ENCODE measurements at regions of chr4 and their contacts with region 1.

Region 1: GRCh38 chr4:86921608-86922252 is 13.1 kb upstream of the AFF1 start:
- DNase-seq: no peak
- H3K4me3 Mint-ChIP-seq: no peak overlapping the region
- H3K27ac Mint-ChIP-seq: no peak overlapping the region
- H3K4me1 Mint-ChIP-seq: peaks cover 16% of the 10 kb centered on the region
- H3K27me3 Mint-ChIP-seq: no peaks in the 10 kb centered on the region

Region 2: DNA sequence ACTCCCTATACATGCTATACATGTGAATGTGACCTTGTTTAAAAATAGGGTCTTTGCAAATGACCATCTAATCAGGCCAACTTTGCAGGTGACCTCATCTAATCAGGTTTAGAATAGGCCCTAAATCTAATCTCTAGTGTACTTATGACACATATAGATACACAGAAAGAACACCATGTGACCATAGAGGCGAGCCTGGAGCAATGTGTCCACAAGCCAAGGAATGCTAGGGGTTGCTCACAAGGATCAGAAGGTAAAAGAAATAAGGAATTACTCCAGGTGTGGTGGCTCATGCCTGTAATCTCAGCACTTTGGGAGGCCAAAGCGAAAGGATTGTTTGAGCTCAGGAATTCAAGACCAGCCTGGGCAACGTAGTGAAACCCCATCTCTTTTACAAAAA is 19.9 kb before region 1 on chr4:
- CTCF ChIA-PET with region 1: interaction called, 16 read pairs
- POLR2A ChIA-PET with region 1: no interaction called
- DNase-seq: no peak
- H3K4me3 Mint-ChIP-seq: no peak overlapping the region
- H3K27ac Mint-ChIP-seq: no peak overlapping the region
- H3K4me1 Mint-ChIP-seq: peaks cover 2% of the 10 kb centered on the region
- H3K27me3 Mint-ChIP-seq: peaks cover 3% of the 10 kb centered on the region

Region 3: GRCh38 chr4:86934771-86935565 is 13.2 kb after region 1 on chr4 and contains the start of gene AFF1:
- CTCF ChIA-PET with region 1: interaction called, 55 read pairs
- POLR2A ChIA-PET with region 1: interaction called, 9 read pairs
- DNase-seq: peak; percentile 91
- H3K4me3 Mint-ChIP-seq: peak within 1 kb of the TSS; percentile 83
- H3K27ac Mint-ChIP-seq: peak within 1 kb of the TSS; percentile 95
- H3K4me1 Mint-ChIP-seq: peaks cover 48% of the 10 kb centered on the region
- H3K27me3 Mint-ChIP-seq: no peaks in the 10 kb centered on the region
- total RNA-seq, gene AFF1: 68.8 to 72.0 TPM

Region 4: DNA sequence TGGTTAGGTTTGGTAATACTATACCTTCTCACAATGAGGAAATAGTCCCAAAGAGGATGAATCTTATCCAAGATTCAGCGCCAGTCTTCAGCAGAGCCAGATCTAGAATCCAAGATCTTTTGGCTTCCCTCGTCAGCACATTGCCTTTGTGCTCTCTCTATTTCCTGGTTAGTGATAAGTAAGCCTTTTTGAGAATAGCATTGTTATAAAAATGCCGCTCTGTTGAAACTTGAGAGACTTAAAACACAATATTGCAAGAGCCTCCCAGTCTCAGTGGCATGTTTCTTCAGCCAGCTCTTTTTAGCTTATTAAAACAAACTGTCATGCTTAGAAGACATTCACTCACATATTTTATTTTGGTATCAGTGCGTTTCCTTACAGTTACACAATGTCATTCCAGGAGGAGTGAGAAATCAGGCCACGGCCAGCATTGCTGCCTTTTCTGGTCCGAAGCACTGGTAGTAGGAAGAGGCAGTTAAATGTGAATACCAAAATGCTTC is 157.3 kb after region 1 on chr4:
- CTCF ChIA-PET with region 1: interaction called, 10 read pairs
- POLR2A ChIA-PET with region 1: no interaction called
- DNase-seq: no peak
- H3K4me3 Mint-ChIP-seq: no peak overlapping the region
- H3K27ac Mint-ChIP-seq: no peak overlapping the region
- H3K4me1 Mint-ChIP-seq: peaks cover 25% of the 10 kb centered on the region
- H3K27me3 Mint-ChIP-seq: no peaks in the 10 kb centered on the region

Region 5: DNA sequence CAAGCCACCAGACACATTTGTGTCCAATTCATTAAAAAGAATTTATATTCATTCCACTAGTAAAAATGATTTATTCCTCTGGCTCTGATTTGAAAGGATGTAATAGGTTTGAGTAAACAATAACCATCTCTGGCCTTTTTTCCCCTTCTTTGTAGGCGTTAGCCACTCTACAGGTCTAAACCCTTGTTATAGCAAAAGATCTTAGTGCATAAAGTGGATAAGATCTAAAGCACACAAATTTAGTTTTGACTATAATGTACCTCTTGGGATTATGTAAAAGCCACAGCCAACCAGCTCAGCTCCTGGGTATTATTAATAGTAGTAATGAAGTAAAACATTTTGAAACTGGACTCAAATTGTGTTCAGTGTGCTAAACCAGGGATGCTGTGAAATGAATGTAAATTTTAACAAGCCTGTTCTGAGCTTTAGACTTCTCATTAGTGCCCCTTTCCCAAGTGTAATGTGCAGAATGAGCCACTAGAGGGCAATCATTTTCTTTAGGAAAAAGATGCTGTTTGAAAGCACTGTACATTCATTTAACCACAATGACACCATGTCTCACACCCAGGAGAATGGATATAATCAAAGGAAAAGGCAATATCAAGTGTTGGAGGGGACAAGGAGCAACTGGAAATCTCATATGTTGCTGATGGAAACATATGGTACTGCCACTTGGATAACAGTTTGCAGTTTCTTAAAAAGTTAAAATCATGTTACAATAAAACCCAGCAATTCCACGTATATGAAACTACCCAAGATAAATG is 228.9 kb after region 1 on chr4:
- CTCF ChIA-PET with region 1: interaction called, 20 read pairs
- POLR2A ChIA-PET with region 1: no interaction called
- DNase-seq: peak; percentile 26
- H3K4me3 Mint-ChIP-seq: no peak overlapping the region
- H3K27ac Mint-ChIP-seq: no peak overlapping the region
- H3K4me1 Mint-ChIP-seq: no peaks in the 10 kb centered on the region
- H3K27me3 Mint-ChIP-seq: no peaks in the 10 kb centered on the region

Region 6: GRCh38 chr4:87188048-87188447 is 266.3 kb after region 1 on chr4:
- CTCF ChIA-PET with region 1: no interaction called
- POLR2A ChIA-PET with region 1: no interaction called
- DNase-seq: no peak
- H3K4me3 Mint-ChIP-seq: no peak overlapping the region
- H3K27ac Mint-ChIP-seq: no peak overlapping the region
- H3K4me1 Mint-ChIP-seq: peaks cover 3% of the 10 kb centered on the region
- H3K27me3 Mint-ChIP-seq: no peaks in the 10 kb centered on the region

Measured in activated CD4-positive, alpha-beta memory T cell treated with anti-CD3 and anti-CD28 coated beads, Interleukin-2, amount 10 ng/mL, durations not matched to agents 7 days and 5 days (primary cell).